Panc1 (cell line): ENCODE measurements at regions of chr15 and their contacts with region 1.

Region 1: DNA sequence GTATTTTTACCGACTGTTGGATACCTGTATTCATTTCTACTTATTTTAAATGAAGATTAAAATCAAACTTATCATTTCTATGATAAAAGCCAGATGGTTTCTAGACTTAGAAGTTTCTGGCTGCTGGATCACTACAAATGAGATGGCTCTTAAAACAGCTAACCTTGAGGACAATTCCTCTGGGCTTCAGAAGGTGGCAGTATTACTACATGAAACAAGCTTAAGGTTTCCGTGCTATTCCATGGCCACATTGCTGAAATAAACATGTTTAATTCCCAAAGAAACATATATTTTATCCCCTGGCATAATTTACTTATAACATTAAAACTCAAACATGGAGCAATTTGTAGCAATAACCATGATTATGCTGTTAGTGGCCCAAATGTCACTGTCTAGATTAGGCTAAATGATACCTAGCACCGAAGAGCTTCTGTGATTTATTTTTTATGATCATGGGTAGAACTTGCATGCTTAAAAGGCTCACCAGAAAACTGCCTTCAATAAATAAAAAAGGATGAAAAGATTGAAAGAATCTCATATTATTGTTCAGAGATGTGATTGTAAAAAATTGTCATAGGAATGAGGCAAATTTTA is 204.0 kb upstream of the NANOGP8 start:
- DNase-seq: no peak
- ATAC-seq: peak; percentile 85
- H3K4me3 ChIP-seq: no peak overlapping the region
- H3K27ac ChIP-seq: no peak overlapping the region
- H3K4me1 ChIP-seq: no peaks in the 10 kb centered on the region
- H3K27me3 ChIP-seq: no peaks in the 10 kb centered on the region
- CTCF ChIP-seq: peak; percentile 73; the same call in 1 of the 2 replicates

Region 2: DNA sequence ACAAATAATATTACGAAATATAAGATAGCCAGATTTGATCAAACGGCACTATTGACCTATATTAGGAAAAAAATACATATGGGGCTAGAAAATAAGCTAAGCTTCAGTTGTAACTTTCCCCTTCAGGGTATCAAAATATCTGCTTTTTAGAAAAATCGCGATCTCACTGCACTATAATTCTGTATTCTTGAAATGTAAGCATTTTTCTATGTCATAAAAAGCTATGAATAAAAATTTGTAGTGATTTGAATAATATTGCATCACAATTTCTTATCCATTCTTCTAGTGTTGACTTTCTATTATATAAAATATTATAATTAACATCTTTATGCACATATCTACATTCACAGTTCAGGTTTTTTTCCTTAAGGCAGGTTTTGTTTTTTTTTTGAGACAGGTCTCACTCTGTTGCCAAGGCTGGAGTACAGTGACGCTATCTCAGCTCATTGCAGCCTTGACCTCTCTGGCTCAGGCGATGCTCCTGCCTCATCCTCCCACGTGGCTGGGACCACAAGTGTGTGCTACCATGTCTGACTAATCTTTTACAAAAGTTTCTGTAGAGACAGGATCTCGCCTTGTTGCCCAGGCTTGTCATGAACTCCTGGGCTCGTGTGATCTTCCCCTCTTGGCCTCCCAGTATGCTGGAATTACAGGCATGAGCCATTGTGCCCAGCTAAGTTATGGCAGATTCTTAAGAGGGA is 1042.7 kb before region 1 on chr15:
- CTCF ChIA-PET with region 1: no interaction called
- POLR2A ChIA-PET with region 1: no interaction called
- in situ Hi-C with region 1: no loop called
- intact Hi-C with region 1: no loop called
- DNase-seq: no peak
- ATAC-seq: no peak
- H3K4me3 ChIP-seq: no peak overlapping the region
- H3K27ac ChIP-seq: no peak overlapping the region
- H3K4me1 ChIP-seq: no peaks in the 10 kb centered on the region
- H3K27me3 ChIP-seq: no peaks in the 10 kb centered on the region
- CTCF ChIP-seq: no peak

Region 3: DNA sequence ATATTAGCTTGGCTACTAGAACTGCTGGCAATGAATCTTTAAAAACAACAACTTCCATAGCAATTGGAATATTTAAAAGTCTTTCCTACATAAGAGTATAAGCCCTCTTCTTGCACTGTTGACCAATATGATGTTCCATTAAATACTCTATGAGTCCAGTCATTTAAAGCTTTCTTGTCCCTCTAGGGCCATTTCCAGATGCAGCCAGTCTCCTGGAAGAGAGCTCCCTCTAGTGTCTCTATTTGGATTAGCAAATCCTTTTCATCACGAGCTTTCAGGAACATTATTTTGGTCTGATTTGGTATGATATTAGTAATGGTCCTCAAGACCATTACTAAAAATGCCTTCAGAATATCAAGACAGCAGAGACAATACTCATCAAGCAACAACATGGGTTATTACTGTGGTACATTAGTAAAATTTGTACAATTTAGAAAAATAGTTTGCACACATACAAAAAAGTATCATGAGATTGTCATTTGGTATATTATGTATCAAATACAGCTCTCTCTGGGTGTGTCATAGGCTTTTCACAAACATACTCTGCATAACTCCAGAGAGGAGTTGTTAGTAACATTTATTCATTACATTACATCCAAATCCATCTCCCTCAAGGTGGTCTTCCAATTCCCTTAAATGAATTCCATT is 155.6 kb after region 1 on chr15:
- CTCF ChIA-PET with region 1: interaction called, 35 read pairs
- POLR2A ChIA-PET with region 1: no interaction called
- in situ Hi-C with region 1: no loop called
- intact Hi-C with region 1: loop called (anchors 2 kb)
- DNase-seq: peak; percentile 32
- ATAC-seq: no peak
- H3K4me3 ChIP-seq: no peak overlapping the region
- H3K27ac ChIP-seq: no peak overlapping the region
- H3K4me1 ChIP-seq: no peaks in the 10 kb centered on the region; the same call in 1 of the 2 replicates
- H3K27me3 ChIP-seq: no peaks in the 10 kb centered on the region
- CTCF ChIP-seq: peak; percentile 80; the same call in 1 of the 2 replicates

Region 4: DNA sequence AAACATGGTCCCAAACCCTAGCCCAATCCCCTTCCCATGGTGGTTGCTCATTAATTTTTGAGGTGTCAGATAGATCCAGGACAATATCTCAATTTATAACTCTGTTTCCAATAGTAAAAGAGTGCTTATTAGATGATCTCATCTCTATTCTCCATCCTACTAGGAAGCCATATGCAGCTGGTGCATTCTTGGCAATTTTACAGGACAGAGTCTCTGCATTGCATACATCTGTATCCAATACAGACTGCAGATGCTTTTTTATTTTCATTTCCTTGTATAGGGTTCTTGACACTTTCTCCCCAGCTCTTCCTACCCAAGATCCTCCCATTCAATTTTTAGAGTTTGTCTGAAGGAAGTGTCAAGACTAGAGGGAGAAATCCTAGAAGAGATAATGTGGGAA is 451.6 kb after region 1 on chr15:
- CTCF ChIA-PET with region 1: interaction called, 12 read pairs
- POLR2A ChIA-PET with region 1: no interaction called
- in situ Hi-C with region 1: no loop called
- intact Hi-C with region 1: loop called (anchors 10 kb)
- DNase-seq: no peak
- ATAC-seq: no peak
- H3K4me3 ChIP-seq: no peak overlapping the region
- H3K27ac ChIP-seq: no peak overlapping the region
- H3K4me1 ChIP-seq: no peaks in the 10 kb centered on the region
- H3K27me3 ChIP-seq: no peaks in the 10 kb centered on the region
- CTCF ChIP-seq: no peak